HCT116 (cell line): ENCODE measurements at regions of chr12 and their contacts with region 1.

Region 1: GRCh38 chr12:3313675-3314663 is 177.0 kb upstream of the PRMT8 start:
- DNase-seq: no peak
- ATAC-seq: peak; percentile 53
- H3K4me3 ChIP-seq: no peak overlapping the region
- H3K27ac ChIP-seq: no peak overlapping the region
- H3K4me1 ChIP-seq: peaks cover 55 to 83% of the 10 kb centered on the region in 2 experiments
- H3K27me3 ChIP-seq: no peaks in the 10 kb centered on the region
- CTCF ChIP-seq: peak in 2 of 3 experiments; percentile 51 to 56; a peak in 5 of 6 replicates
- POLR2A ChIP-seq: no peak
- RAD21 ChIP-seq: peak; percentile 52

Region 2: DNA sequence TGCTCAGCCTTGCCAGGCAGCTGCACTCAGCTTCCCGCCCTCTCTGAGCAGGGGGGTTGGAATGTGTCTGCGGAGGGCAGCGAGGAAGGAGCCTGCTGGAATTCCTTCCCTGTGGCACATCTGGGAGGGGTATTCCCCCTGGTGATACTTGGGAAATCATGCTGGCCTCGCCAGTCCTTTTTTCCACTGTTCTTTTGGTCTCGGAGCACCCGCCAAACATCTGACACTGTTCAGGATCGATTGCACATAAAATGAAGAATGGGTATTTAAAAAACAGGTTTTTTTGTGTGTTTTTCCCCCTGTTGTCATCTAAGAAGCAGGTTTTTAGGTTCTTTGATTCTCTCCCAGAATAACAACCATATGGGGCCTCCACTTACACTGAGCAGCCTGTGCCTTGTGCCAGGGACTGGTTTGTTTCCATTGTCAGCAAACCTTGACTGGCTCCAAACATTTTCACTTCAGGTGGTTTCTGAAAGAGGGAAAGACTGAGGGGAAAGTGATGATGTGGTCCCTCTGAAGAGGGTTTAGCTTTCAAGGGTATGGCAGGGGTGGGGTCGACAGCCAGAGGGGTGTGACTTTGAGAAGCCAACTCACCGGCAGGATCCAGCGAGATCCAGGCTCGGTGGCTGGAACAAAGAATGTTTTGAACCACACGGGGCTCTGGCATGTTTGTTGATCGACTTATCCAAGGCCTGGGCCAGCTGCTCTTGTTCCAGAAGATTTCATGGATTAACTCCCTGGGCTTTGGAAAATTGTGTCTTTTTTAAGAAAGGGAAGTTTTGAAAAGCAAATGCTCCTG is 1046.1 kb before region 1 on chr12:
- CTCF ChIA-PET with region 1: no interaction called
- POLR2A ChIA-PET with region 1: no interaction called
- RAD21 ChIA-PET with region 1: no interaction called
- intact Hi-C with region 1: no loop called
- DNase-seq: no peak
- ATAC-seq: no peak
- H3K4me3 ChIP-seq: no peak overlapping the region
- H3K27ac ChIP-seq: no peak overlapping the region
- H3K4me1 ChIP-seq: no peaks in the 10 kb centered on the region
- H3K27me3 ChIP-seq: peaks cover 30% of the 10 kb centered on the region
- CTCF ChIP-seq: no peak
- POLR2A ChIP-seq: no peak
- RAD21 ChIP-seq: no peak

Region 3: DNA sequence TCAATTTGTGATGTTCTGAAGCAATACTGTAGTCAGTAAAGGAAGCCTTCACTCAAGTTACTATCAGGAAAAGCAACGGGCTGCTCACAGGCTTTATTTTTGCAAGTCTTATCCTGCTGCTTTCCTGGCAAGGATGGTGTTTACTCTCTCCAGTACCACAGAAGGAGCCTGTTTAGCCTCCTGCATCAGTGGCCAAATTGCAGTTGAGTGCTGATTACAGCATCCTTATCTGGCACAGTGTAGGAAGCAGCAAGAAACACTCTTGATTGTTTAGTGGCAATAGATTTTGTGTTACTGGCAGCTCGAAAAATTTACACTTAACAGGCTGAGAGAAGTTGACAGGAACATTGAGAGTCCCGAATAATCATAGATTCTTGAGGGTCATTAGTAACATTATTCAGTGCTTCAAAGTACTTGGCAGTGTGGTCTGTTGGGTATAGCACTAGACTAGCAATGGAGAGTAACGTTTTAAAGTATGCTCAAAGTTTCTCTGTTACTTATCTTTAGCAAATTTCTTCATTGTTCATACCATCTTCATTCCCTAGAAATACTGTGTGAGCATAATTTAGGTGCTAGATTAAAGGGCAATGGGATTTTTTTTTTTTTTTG is 411.6 kb before region 1 on chr12:
- CTCF ChIA-PET with region 1: no interaction called
- POLR2A ChIA-PET with region 1: no interaction called
- RAD21 ChIA-PET with region 1: no interaction called
- intact Hi-C with region 1: no loop called
- DNase-seq: no peak
- ATAC-seq: no peak
- H3K4me3 ChIP-seq: no peak overlapping the region
- H3K27ac ChIP-seq: no peak overlapping the region
- H3K4me1 ChIP-seq: no peaks in the 10 kb centered on the region
- H3K27me3 ChIP-seq: no peaks in the 10 kb centered on the region
- CTCF ChIP-seq: no peak
- POLR2A ChIP-seq: no peak
- RAD21 ChIP-seq: no peak

Region 4: GRCh38 chr12:3336606-3337311 is 22.8 kb after region 1 on chr12:
- CTCF ChIA-PET with region 1: interaction called, 17 read pairs
- POLR2A ChIA-PET with region 1: no interaction called
- RAD21 ChIA-PET with region 1: interaction called in 1 of 2 experiments, 4 read pairs
- intact Hi-C with region 1: no loop called
- DNase-seq: peak; percentile 86
- ATAC-seq: peak; percentile 78
- H3K4me3 ChIP-seq: peak overlapping the region in 1 of 2 experiments; percentile 29; a peak in 3 of 4 replicates
- H3K27ac ChIP-seq: peak overlapping the region; percentile 76
- H3K4me1 ChIP-seq: peaks cover 33 to 52% of the 10 kb centered on the region in 2 experiments
- H3K27me3 ChIP-seq: no peaks in the 10 kb centered on the region
- CTCF ChIP-seq: no peak
- POLR2A ChIP-seq: no peak
- RAD21 ChIP-seq: 0 out of 2 replicates have a peak, but pooled peaks have one; percentile 6

Region 5: DNA sequence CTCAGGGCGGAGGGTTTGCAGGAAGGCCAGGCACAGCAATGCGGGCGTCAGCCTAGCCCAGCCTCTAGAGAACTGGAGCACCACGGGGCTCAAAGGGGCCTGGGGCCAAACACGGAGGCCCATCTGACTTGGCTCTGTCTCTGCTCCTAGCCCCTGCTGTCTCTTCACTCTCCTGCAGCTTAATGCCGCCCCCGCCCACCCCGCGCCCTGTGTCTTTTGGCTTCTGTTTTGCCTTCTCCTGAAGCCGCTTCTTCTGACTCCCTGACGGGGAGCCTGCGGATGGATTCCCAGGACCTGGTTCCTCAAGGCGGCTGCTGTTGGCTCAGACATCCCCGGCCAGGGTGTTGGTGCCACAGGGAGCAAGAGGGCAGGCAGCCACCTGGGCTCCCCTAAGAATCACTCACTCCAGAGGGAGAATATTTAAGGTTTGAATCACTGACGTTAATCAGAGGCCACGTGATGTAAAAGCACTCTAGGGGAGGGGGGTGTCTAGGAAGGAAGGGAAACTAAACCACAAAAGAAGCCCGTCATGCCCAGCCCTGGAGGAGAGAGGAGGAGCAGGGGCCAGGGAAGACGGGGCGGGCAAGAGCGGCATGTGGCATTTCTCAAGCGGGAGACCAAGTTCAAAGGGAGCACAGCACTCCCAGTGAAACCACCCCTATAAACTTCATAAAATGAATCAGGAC is 140.2 kb after region 1 on chr12:
- CTCF ChIA-PET with region 1: interaction called, 21 read pairs
- POLR2A ChIA-PET with region 1: no interaction called
- RAD21 ChIA-PET with region 1: interaction called in 1 of 2 experiments, 4 read pairs
- intact Hi-C with region 1: loop called (anchors 2 kb)
- DNase-seq: peak; percentile 70
- ATAC-seq: peak; percentile 75
- H3K4me3 ChIP-seq: peak overlapping the region; percentile 13 to 45
- H3K27ac ChIP-seq: peak overlapping the region; percentile 30; the same call in 1 of the 2 replicates
- H3K4me1 ChIP-seq: peaks cover 33 to 45% of the 10 kb centered on the region in 2 experiments
- H3K27me3 ChIP-seq: peaks cover 4% of the 10 kb centered on the region; the same call in 1 of the 2 replicates
- CTCF ChIP-seq: no peak
- POLR2A ChIP-seq: no peak
- RAD21 ChIP-seq: 0 out of 2 replicates have a peak, but pooled peaks have one; percentile 12

Region 6: DNA sequence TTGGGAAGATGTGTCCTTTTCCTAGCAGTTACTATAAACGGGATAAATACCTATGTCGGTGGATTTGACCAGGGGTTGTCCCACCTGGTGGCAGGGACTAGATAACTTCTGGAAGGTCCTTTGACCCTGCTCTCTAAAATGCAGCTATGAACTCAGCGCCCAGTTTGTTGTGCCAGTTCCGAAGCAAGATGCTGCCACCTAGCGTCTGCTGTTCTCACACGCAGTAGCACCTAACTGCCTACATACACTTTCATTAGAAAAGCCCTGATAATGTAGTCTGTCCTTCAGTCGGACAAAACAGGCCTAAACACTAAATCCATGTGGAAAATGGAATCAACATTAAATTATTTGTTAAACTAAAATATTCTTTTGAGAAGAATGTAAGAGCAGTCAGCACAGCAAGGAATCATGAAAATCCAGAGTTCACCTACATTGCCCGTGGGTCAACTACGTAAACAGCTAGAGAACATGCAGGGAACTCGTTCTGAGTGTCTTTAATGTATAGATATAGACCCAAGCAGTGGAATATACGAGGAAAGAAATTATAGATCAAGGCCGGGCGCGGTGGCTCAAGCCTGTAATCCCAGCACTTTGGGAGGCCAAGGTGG is 490.0 kb after region 1 on chr12:
- CTCF ChIA-PET with region 1: interaction called, 23 read pairs
- POLR2A ChIA-PET with region 1: no interaction called
- RAD21 ChIA-PET with region 1: no interaction called
- intact Hi-C with region 1: no loop called
- DNase-seq: peak; percentile 64
- ATAC-seq: peak; percentile 98
- H3K4me3 ChIP-seq: no peak overlapping the region
- H3K27ac ChIP-seq: no peak overlapping the region
- H3K4me1 ChIP-seq: no peaks in the 10 kb centered on the region
- H3K27me3 ChIP-seq: peaks cover 22% of the 10 kb centered on the region
- CTCF ChIP-seq: peak; percentile 74 to 95 (median 93)
- POLR2A ChIP-seq: no peak
- RAD21 ChIP-seq: peak; percentile 86